Activated T-helper 2 cell treated with anti-CD3 and anti-CD28 coated beads, Interferon-gamma antibody, Interleukin-2, Interleukin-4, amounts not matched to agents 10 μg/mL and 5 μg/mL and 100 μg/mL, durations not matched to agents 14 hours and 24 hours and 36 hours (primary cell): ENCODE measurements at regions of chr5 and their contacts with region 1.

Region 1: DNA sequence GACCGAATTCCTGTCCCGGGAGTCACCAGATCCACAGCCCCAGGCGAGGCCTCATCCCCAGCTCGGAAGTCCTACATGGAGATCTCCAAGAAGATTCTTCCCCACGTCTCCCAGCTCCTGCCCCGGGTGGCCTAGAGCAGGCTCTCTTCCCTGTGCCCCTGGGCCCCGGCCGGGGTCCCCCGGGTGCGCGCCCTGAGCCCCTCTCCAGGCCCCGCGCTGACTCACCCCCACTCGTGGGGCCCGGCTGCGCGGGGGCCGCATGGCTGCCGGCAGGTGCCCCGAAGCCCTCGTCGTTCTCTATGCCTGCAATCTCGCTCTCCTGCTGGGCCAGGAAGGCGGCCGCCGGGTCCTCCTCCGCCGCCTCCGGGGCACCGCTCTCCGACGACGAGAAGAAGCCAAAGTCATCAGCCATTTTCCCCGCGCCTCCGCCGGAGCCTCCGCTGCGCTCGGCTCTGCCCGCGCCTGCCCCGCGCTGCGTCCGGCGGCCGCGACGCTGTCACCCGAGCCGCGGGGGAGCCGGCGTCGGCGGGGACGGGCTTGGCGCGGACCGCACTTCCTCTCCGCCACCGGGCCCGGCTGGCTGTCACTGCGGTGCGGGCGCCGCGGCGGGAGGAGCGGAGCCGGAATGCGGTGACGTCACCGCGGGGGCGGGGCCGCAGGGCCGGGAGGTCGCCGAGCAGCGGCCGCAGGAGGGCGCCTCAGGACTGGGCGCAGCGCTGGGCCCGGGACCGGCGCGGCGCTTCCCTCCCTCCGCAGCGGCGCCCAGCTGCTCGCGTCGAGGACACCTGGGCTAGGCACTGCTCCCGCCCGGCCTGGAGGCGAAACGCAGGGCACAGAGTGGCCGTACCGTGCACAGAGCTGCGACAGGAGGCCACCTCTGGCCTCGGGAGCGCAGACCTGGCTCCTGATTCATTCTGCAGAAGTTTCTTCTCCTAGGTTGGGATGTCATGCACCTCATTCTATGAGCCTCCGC is at the start of gene CLTB:
- DNase-seq: peak; percentile 75
- H3K4me3 Mint-ChIP-seq: peak within 1 kb of the TSS; percentile 82
- H3K27ac Mint-ChIP-seq: peak within 1 kb of the TSS; percentile 62
- H3K4me1 Mint-ChIP-seq: peaks cover 24% of the 10 kb centered on the region
- H3K27me3 Mint-ChIP-seq: peaks cover 13% of the 10 kb centered on the region
- total RNA-seq, gene CLTB: 47.9 and 57.9 TPM in 2 replicates

Region 2: GRCh38 chr5:175216991-175217390 is 1199.2 kb before region 1 on chr5:
- intact Hi-C with region 1: no loop called
- DNase-seq: no peak
- H3K4me3 Mint-ChIP-seq: no peak overlapping the region
- H3K27ac Mint-ChIP-seq: no peak overlapping the region
- H3K4me1 Mint-ChIP-seq: no peaks in the 10 kb centered on the region
- H3K27me3 Mint-ChIP-seq: no peaks in the 10 kb centered on the region

Region 3: GRCh38 chr5:176388444-176389134 is 27.6 kb before region 1 on chr5 and contains the starts of genes HIGD2A and NOP16:
- intact Hi-C with region 1: loop called (anchors 2 kb)
- DNase-seq: peak; percentile 98
- H3K4me3 Mint-ChIP-seq: peak within 1 kb of the TSS; percentile 97
- H3K27ac Mint-ChIP-seq: peak within 1 kb of the TSS; percentile 99
- H3K4me1 Mint-ChIP-seq: peaks cover 21% of the 10 kb centered on the region
- H3K27me3 Mint-ChIP-seq: no peaks in the 10 kb centered on the region
- total RNA-seq, gene HIGD2A: 102 and 105 TPM in 2 replicates
- total RNA-seq, gene NOP16: 79.6 and 84.0 TPM in 2 replicates

Region 4: DNA sequence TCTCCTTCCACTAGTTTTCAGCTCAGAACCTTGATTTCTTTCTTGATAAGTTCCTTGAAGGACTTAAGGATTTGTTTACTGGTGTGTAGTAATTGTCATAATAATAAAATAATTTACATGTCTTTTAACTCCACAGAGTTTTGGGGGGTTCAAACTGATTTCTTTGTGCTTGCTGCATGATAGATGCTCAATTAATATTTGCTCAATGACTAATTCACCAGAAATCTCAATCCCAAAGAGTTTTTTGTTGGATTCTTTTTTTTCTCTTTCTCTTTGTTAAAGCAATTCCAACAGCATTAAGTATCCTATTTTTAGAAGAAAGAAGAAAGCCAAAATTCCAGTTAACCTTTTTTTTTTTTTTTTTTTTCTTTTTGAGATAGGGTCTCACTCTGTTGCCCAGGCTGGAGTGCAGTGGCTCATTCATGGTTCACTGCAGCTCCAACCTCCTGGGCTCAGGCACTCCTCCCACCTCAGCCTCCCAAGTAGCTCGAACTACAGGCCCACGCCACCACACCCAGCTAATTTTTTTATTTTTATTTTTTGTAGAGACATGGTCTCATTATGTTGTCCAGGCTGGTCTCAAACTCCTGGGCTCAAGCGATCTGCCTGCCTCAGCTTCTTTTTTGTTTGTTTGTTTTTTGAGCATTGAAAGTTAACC is 42.8 kb after region 1 on chr5:
- intact Hi-C with region 1: no loop called
- DNase-seq: no peak
- H3K4me3 Mint-ChIP-seq: no peak overlapping the region
- H3K27ac Mint-ChIP-seq: no peak overlapping the region
- H3K4me1 Mint-ChIP-seq: peaks cover 15% of the 10 kb centered on the region
- H3K27me3 Mint-ChIP-seq: no peaks in the 10 kb centered on the region

Region 5: GRCh38 chr5:176543428-176544173 is 127.4 kb after region 1 on chr5:
- intact Hi-C with region 1: loop called (anchors 2 kb)
- DNase-seq: peak; percentile 75
- H3K4me3 Mint-ChIP-seq: peak overlapping the region; percentile 91
- H3K27ac Mint-ChIP-seq: peak overlapping the region; percentile 95
- H3K4me1 Mint-ChIP-seq: peaks cover 40% of the 10 kb centered on the region
- H3K27me3 Mint-ChIP-seq: no peaks in the 10 kb centered on the region

Region 6: GRCh38 chr5:176573564-176574296 is 157.5 kb after region 1 on chr5:
- intact Hi-C with region 1: loop called (anchors 1 kb)
- DNase-seq: peak; percentile 57
- H3K4me3 Mint-ChIP-seq: no peak overlapping the region
- H3K27ac Mint-ChIP-seq: no peak overlapping the region
- H3K4me1 Mint-ChIP-seq: no peaks in the 10 kb centered on the region
- H3K27me3 Mint-ChIP-seq: peaks cover 5% of the 10 kb centered on the region

Region 7: DNA sequence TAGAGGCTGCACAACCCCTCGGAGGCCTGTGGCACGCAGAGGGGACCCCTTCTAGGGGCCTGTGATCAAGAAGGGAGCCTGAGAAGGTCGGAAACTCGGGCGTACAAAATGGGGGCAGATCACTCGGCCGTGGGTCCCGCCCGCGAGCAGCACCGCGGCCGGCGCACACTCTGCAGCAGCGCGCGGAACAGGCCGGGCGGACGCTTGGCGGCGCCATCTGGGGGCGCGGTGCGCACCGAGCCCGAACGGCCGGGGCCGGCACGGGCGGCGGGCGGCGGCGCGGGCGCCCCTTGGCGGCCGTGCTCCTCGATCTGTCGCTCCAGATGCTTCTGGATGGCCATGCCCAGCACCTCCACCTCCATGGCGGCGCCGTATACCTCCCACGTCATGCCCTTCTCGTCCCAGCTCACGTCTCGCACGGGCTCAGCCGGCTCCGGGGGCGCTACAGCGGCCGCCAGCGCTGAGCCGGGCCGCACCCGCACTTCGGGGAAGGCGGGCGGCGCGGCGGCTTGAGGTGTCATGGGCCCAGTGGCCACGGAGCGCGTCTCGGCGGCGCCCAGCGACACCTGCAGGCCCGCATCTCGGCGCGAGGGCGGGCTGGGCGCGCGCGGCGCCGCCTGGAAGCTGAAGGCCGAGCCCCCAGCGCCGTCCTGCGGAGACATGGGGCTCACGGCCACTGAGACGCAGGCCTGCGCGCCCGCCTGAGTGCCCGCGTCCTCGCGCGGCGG is 180.6 kb after region 1 on chr5:
- intact Hi-C with region 1: loop called (anchors 2 kb)
- DNase-seq: peak; percentile 52
- H3K4me3 Mint-ChIP-seq: peak overlapping the region; percentile 73
- H3K27ac Mint-ChIP-seq: no peak overlapping the region
- H3K4me1 Mint-ChIP-seq: peaks cover 2% of the 10 kb centered on the region
- H3K27me3 Mint-ChIP-seq: peaks cover 4% of the 10 kb centered on the region